Pancreas (tissue), 10 donors: ENCODE measurements at regions of chr11 and their contacts with region 1.

Region 1: DNA sequence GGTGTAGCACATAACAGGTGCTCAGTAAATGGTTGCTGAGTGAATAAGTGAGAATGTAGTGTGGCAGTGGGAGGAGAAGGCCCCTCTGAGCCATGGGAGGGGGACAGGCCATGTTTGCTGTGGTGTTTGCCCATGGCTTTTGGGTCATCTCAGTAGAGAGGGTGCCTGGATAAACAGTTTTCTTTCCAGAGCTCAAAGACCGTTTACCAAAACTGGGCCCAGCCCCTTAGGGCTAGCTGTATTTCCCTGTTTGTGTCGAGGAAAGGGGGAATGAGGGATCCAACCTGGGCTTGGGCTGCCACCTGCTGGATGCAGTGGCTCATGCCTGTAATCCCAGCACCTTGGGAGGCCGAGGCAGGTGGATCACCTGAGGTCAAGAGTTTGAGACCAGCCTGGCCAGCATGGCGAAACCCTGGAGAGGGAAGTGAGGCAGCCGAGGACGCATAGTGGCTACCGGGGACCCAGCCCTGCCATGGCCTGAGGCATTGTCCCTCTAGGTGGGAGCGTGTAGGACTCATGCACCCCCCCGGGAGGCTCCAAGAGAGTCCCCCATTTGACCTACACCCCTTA is 8.7 kb upstream of the LTO1 start:
- DNase-seq: peak in 1 of 6 donors; percentile 55
- ATAC-seq: peak in 3 of 4 donors; percentile 40 to 49 (median 40)
- H3K4me3 ChIP-seq: no peak overlapping the region
- H3K27ac ChIP-seq: no peak overlapping the region
- H3K4me1 ChIP-seq: peaks cover 0 to 2% (median 0%) of the 10 kb centered on the region in 3 donors
- H3K27me3 ChIP-seq: no peaks in the 10 kb centered on the region
- CTCF ChIP-seq: peak in 3 of 4 donors; percentile 12 to 22 (median 15)

Region 2: GRCh38 chr11:69542329-69543168 is 141.3 kb before region 1 on chr11:
- intact Hi-C with region 1: no loop called
- DNase-seq: peak in 1 of 6 donors; percentile 36
- ATAC-seq: no peak
- H3K4me3 ChIP-seq: no peak overlapping the region
- H3K27ac ChIP-seq: no peak overlapping the region
- H3K4me1 ChIP-seq: no peaks in the 10 kb centered on the region
- H3K27me3 ChIP-seq: no peaks in the 10 kb centered on the region
- CTCF ChIP-seq: no peak

Region 3: DNA sequence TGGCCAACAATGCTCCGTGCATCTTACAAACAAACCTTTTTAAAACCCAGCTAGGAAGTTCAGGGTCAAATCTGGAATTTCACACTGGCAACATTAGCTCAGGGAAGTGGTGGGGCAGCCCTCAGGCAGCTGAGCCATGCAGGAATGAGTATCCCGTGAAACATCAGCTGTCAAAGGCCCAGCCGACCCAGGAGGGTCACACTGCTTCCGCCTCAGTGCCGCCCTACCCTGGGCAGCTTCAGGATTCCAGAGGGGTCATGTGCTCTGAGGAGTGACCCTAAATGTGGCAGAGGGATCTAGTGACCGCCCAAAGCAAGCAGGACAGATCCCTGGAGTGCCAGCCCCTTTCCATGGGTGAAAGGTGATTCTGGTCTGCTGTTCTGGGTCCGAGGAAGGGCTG is 129.0 kb before region 1 on chr11:
- intact Hi-C with region 1: no loop called
- DNase-seq: no peak
- ATAC-seq: no peak
- H3K4me3 ChIP-seq: no peak overlapping the region
- H3K27ac ChIP-seq: no peak overlapping the region
- H3K4me1 ChIP-seq: no peaks in the 10 kb centered on the region
- H3K27me3 ChIP-seq: no peaks in the 10 kb centered on the region
- CTCF ChIP-seq: no peak

Region 4: DNA sequence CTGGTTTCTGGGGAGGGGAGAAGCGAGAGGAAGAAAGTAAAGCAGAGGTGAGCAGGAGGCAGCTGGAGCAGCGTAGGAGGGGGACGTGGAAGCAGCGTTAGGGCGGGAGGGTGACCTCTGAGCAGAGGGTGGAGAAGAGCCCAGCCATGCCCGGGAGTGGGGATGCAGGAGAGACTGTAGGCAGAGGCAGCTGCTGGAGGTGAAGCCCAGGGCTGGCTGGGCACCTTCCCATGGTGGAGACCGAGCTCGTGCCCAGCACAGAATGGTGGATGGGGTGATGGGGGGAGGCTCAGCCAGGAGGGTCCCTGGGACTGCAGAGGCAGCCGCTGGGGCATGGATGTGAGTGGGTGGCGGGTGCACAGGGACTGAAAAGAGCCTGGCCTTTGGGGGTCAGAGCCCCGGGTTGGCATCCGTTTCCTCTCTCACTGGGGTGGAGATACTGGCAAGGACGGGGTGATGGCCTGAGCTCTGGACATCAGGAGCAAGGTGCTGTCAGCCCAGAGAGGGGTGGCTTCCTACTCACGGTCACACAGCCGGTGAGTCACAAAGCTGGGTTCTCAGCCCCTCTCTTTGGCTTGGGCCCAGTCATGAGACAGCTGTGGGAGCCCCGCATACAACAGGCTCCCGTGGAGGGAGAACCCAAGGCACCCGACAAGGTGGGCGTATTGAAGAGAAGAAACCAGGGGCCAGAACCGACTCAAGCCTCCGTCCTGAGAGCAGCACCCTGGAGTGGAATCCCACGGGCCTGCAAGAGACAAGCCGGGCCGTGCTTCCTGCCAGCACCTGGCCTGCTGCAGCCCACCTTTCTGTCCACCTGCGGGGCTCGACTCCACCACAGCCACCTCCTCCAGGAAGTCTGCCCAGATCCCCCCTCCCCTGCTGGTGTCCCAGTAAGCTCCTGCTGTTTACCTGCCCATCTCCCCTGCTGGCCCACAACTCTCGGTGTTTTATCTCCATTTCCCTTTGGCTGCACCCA is 181.1 kb after region 1 on chr11:
- intact Hi-C with region 1: no loop called
- DNase-seq: no peak
- ATAC-seq: no peak
- H3K4me3 ChIP-seq: no peak overlapping the region
- H3K27ac ChIP-seq: no peak overlapping the region
- H3K4me1 ChIP-seq: no peaks in the 10 kb centered on the region
- H3K27me3 ChIP-seq: no peaks in the 10 kb centered on the region
- CTCF ChIP-seq: no peak

Region 5: GRCh38 chr11:69881449-69882269 is 197.8 kb after region 1 on chr11:
- intact Hi-C with region 1: loop called in 1 of 3 experiments (anchors 5 kb)
- DNase-seq: peak in 1 of 6 donors; percentile 49
- ATAC-seq: no peak
- H3K4me3 ChIP-seq: no peak overlapping the region
- H3K27ac ChIP-seq: no peak overlapping the region
- H3K4me1 ChIP-seq: no peaks in the 10 kb centered on the region
- H3K27me3 ChIP-seq: no peaks in the 10 kb centered on the region
- CTCF ChIP-seq: no peak

Region 6: DNA sequence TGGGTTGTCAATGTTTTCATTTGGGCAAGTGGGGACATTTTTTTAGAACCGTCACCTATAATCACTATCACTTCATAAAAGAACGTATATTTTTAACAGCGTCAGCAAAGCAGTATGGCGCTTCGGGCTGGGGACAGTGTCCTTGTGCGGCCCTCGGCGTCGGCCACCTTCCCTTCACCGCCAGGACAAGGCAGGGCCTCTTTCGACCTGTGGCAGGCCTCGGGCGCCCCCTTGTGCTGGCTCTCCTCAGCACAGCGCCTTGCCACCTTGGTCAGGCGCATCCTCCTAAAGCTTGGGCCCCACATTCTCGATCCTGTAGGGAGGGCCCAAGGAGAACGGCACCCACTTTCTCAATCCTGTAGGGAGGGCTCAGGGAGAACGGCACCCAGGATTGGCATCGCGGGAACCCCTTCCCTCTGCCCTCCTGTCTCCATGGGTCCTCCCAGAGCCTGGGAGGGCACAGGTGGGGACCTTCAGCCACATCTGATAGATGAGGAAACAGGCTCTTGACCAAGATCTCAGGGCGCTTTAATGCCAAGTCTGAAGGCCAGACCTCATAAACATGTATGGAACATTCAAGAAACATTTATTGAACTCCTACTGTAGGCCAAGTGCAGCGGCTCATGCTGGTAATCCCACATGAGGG is 507.8 kb after region 1 on chr11:
- intact Hi-C with region 1: loop called in 1 of 3 experiments (anchors 10 kb)
- DNase-seq: peak; percentile 36 to 90 (median 76)
- ATAC-seq: peak; percentile 74 to 90 (median 89)
- H3K4me3 ChIP-seq: no peak overlapping the region
- H3K27ac ChIP-seq: no peak overlapping the region
- H3K4me1 ChIP-seq: no peaks in the 10 kb centered on the region
- H3K27me3 ChIP-seq: no peaks in the 10 kb centered on the region
- CTCF ChIP-seq: peak; percentile 49 to 85 (median 74)